ENCODE measurements at regions of chr10 and their contacts with region 1.

Region 1: DNA sequence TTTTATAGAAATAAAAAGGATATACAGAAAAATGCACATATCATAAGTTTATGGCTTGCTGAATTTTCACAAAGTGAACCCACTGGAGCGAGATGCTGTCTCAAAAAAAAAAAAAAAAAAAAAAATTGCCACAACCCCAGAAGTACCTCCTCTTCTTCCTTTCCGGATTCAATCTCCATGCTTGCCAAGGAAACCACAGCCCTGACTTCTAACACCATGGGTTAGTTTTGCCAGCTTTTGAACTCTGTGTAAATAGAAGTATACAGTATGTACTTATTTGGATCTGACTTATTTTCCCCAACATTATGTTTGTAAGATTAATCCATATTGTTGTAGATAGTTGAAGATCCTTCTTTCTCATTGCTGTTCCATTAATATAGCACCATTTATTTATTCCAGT is 40.0 kb downstream of the FANK1 start:
- DNase-seq: no peak
- ATAC-seq: no peak
- H3K4me3 ChIP-seq: no peak overlapping the region
- H3K27ac ChIP-seq: no peak overlapping the region
- H3K4me1 ChIP-seq: peaks cover 4 to 10% of the 10 kb centered on the region in 2 experiments; a peak in 3 of 4 replicates
- H3K27me3 ChIP-seq: no peaks in the 10 kb centered on the region
- CTCF ChIP-seq: no peak
- POLR2A ChIP-seq: no peak
- RAD21 ChIP-seq: no peak

Region 2: GRCh38 chr10:125961739-125962138 is 25.4 kb after region 1 on chr10:
- CTCF ChIA-PET with region 1: interaction called, 11 read pairs
- POLR2A ChIA-PET with region 1: no interaction called
- RAD21 ChIA-PET with region 1: no interaction called
- intact Hi-C with region 1: no loop called
- DNase-seq: no peak
- ATAC-seq: peak; percentile 78
- H3K4me3 ChIP-seq: no peak overlapping the region
- H3K27ac ChIP-seq: no peak overlapping the region
- H3K4me1 ChIP-seq: no peaks in the 10 kb centered on the region
- H3K27me3 ChIP-seq: no peaks in the 10 kb centered on the region
- CTCF ChIP-seq: peak; percentile 31 to 34 (median 33); a peak in 3 of 6 replicates
- POLR2A ChIP-seq: no peak
- RAD21 ChIP-seq: peak; percentile 50; the same call in 1 of the 2 replicates

Region 3: GRCh38 chr10:126160971-126161659 is 224.8 kb after region 1 on chr10:
- CTCF ChIA-PET with region 1: interaction called, 26 read pairs
- POLR2A ChIA-PET with region 1: no interaction called
- RAD21 ChIA-PET with region 1: no interaction called
- intact Hi-C with region 1: no loop called
- DNase-seq: peak; percentile 50
- ATAC-seq: peak; percentile 82
- H3K4me3 ChIP-seq: no peak overlapping the region
- H3K27ac ChIP-seq: no peak overlapping the region
- H3K4me1 ChIP-seq: no peaks in the 10 kb centered on the region
- H3K27me3 ChIP-seq: peaks cover 58% of the 10 kb centered on the region
- CTCF ChIP-seq: peak; percentile 74 to 93 (median 88)
- POLR2A ChIP-seq: no peak
- RAD21 ChIP-seq: peak; percentile 91

Region 4: GRCh38 chr10:126288556-126289493 is 352.5 kb after region 1 on chr10:
- CTCF ChIA-PET with region 1: no interaction called
- POLR2A ChIA-PET with region 1: no interaction called
- RAD21 ChIA-PET with region 1: no interaction called
- intact Hi-C with region 1: no loop called
- DNase-seq: no peak
- ATAC-seq: no peak
- H3K4me3 ChIP-seq: no peak overlapping the region
- H3K27ac ChIP-seq: no peak overlapping the region
- H3K4me1 ChIP-seq: no peaks in the 10 kb centered on the region
- H3K27me3 ChIP-seq: peaks cover 72% of the 10 kb centered on the region
- CTCF ChIP-seq: no peak
- POLR2A ChIP-seq: no peak
- RAD21 ChIP-seq: no peak

Region 5: GRCh38 chr10:126598003-126598402 is 661.7 kb after region 1 on chr10:
- CTCF ChIA-PET with region 1: interaction called, 14 read pairs
- POLR2A ChIA-PET with region 1: no interaction called
- RAD21 ChIA-PET with region 1: no interaction called
- intact Hi-C with region 1: no loop called
- DNase-seq: peak; percentile 38
- ATAC-seq: peak; percentile 98
- H3K4me3 ChIP-seq: no peak overlapping the region
- H3K27ac ChIP-seq: no peak overlapping the region
- H3K4me1 ChIP-seq: no peaks in the 10 kb centered on the region
- H3K27me3 ChIP-seq: peaks cover 53% of the 10 kb centered on the region
- CTCF ChIP-seq: peak; percentile 55 to 93 (median 86); a peak in 5 of 6 replicates
- POLR2A ChIP-seq: no peak
- RAD21 ChIP-seq: peak; percentile 66

Measured in HCT116 (cell line).